ENCODE measurements at regions of chr4 and their contacts with region 1.

Region 1: GRCh38 chr4:140028676-140029517 is 125.1 kb downstream of the MAML3 start:
- DNase-seq: no peak
- H3K4me3 Mint-ChIP-seq: no peak overlapping the region
- H3K27ac Mint-ChIP-seq: no peak overlapping the region
- H3K4me1 Mint-ChIP-seq: no peaks in the 10 kb centered on the region
- H3K27me3 Mint-ChIP-seq: peaks cover 56% of the 10 kb centered on the region

Region 2: GRCh38 chr4:139973015-139973414 is 55.9 kb before region 1 on chr4:
- intact Hi-C with region 1: loop called (anchors 2 kb)
- DNase-seq: no peak
- H3K4me3 Mint-ChIP-seq: no peak overlapping the region
- H3K27ac Mint-ChIP-seq: no peak overlapping the region
- H3K4me1 Mint-ChIP-seq: peaks cover 22% of the 10 kb centered on the region
- H3K27me3 Mint-ChIP-seq: peaks cover 2% of the 10 kb centered on the region